CD8-positive, alpha-beta T cell (primary cell): ENCODE measurements at regions of chr12 and their contacts with region 1.

Region 1: DNA sequence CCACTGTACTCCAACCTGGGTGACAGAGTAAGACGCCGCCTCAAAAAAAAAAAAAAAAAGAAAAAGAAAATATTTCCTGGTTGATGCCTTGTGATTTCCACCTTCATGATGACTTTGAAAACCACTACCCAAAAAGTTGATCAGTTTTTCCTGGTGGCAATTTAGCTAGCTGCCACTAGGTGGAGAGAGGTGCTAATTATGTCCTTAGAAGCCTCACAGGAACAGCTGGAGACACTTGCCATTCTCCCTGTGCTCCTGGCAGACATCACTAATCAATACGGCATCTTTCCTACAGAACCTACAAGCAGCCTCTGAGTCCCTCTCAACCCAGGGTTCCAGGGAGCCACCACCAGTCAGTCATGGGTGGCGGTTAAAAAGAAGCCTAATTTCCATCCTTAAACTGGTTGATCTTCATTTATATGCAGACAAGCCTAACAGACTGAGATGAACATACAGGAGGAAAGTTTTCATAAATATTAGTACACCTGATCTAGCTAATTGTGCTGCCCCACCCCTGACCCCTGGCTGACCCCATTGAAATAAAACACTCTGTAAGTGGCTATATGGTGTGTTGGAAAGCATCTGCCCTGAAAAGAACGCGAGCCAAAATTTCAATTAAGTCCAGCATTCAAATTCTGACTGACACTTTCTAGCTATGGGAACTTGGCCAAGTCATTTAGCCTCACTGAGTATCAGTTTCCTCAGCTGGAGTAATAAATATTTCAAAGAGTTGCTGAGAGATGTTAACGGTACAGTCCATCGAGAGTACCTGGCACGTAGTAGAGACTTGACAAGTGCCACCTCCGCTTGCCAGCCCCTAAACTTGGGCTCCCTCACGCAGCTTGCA is 6.2 kb upstream of the OAS1 start:
- DNase-seq: peak in 6 of 9 experiments; percentile 7 to 65 (median 35)
- ATAC-seq: peak; percentile 59
- H3K4me3 ChIP-seq: no peak overlapping the region
- H3K4me3 Mint-ChIP-seq: no peak overlapping the region
- H3K27ac ChIP-seq: no peak overlapping the region
- H3K27ac Mint-ChIP-seq: no peak overlapping the region
- H3K4me1 ChIP-seq: peaks cover 4% of the 10 kb centered on the region
- H3K4me1 Mint-ChIP-seq: peaks cover 22% of the 10 kb centered on the region
- H3K27me3 ChIP-seq: no peaks in the 10 kb centered on the region
- H3K27me3 Mint-ChIP-seq: peaks cover 7% of the 10 kb centered on the region
- CTCF ChIP-seq: peak; percentile 71

Region 2: DNA sequence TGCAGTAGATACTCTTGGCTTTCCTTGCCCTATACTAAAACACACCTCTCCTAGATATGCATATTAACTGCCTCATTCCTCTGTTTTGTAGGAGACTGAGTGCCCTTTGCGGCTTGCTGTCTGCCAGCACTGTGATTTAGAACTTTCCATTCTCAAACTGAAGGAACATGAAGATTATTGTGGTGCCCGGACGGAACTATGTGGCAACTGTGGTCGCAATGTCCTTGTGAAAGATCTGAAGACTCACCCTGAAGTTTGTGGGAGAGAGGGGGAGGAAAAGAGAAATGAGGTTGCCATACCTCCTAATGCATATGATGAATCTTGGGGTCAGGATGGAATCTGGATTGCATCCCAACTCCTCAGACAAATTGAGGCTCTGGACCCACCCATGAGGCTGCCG is 759.8 kb before region 1 on chr12:
- CTCF ChIA-PET with region 1: no interaction called
- POLR2A ChIA-PET with region 1: no interaction called
- intact Hi-C with region 1: no loop called
- DNase-seq: peak in 1 of 9 experiments; percentile 40
- ATAC-seq: no peak
- H3K4me3 ChIP-seq: no peak overlapping the region
- H3K4me3 Mint-ChIP-seq: no peak overlapping the region
- H3K27ac ChIP-seq: no peak overlapping the region
- H3K27ac Mint-ChIP-seq: peak overlapping the region; percentile 21
- H3K4me1 ChIP-seq: no peaks in the 10 kb centered on the region
- H3K4me1 Mint-ChIP-seq: no peaks in the 10 kb centered on the region
- H3K27me3 ChIP-seq: no peaks in the 10 kb centered on the region
- H3K27me3 Mint-ChIP-seq: no peaks in the 10 kb centered on the region
- CTCF ChIP-seq: no peak

Region 3: GRCh38 chr12:112937741-112938719 is 37.5 kb after region 1 on chr12 and contains the start of gene OAS3:
- CTCF ChIA-PET with region 1: interaction called, 4 read pairs
- POLR2A ChIA-PET with region 1: no interaction called
- intact Hi-C with region 1: loop called in 1 of 2 experiments (anchors 5 kb)
- DNase-seq: peak; percentile 20 to 92 (median 62)
- ATAC-seq: peak; percentile 67
- H3K4me3 ChIP-seq: peak within 1 kb of the TSS; percentile 68 to 81
- H3K4me3 Mint-ChIP-seq: peak within 1 kb of the TSS; percentile 87
- H3K27ac ChIP-seq: peak within 1 kb of the TSS; percentile 69 to 78
- H3K27ac Mint-ChIP-seq: peak within 1 kb of the TSS; percentile 89
- H3K4me1 ChIP-seq: peaks cover 20% of the 10 kb centered on the region
- H3K4me1 Mint-ChIP-seq: peaks cover 30% of the 10 kb centered on the region
- H3K27me3 ChIP-seq: no peaks in the 10 kb centered on the region
- H3K27me3 Mint-ChIP-seq: no peaks in the 10 kb centered on the region
- CTCF ChIP-seq: no peak
- total RNA-seq, gene OAS3: 7.7 to 8.2 TPM

Region 4: GRCh38 chr12:112992541-112993398 is 92.2 kb after region 1 on chr12:
- CTCF ChIA-PET with region 1: interaction called, 14 read pairs
- POLR2A ChIA-PET with region 1: no interaction called
- intact Hi-C with region 1: no loop called
- DNase-seq: peak; percentile 25 to 70 (median 46)
- ATAC-seq: peak; percentile 79
- H3K4me3 ChIP-seq: no peak overlapping the region
- H3K4me3 Mint-ChIP-seq: no peak overlapping the region
- H3K27ac ChIP-seq: no peak overlapping the region
- H3K27ac Mint-ChIP-seq: no peak overlapping the region
- H3K4me1 ChIP-seq: peaks cover 9% of the 10 kb centered on the region
- H3K4me1 Mint-ChIP-seq: peaks cover 11% of the 10 kb centered on the region
- H3K27me3 ChIP-seq: no peaks in the 10 kb centered on the region
- H3K27me3 Mint-ChIP-seq: no peaks in the 10 kb centered on the region
- CTCF ChIP-seq: peak; percentile 74

Region 5: GRCh38 chr12:113030875-113031525 is 130.5 kb after region 1 on chr12:
- CTCF ChIA-PET with region 1: interaction called, 23 read pairs
- POLR2A ChIA-PET with region 1: no interaction called
- intact Hi-C with region 1: loop called in 1 of 2 experiments (anchors 1 kb)
- DNase-seq: peak in 2 of 9 experiments; percentile 36 to 48
- ATAC-seq: no peak
- H3K4me3 ChIP-seq: no peak overlapping the region
- H3K4me3 Mint-ChIP-seq: no peak overlapping the region
- H3K27ac ChIP-seq: no peak overlapping the region
- H3K27ac Mint-ChIP-seq: no peak overlapping the region
- H3K4me1 ChIP-seq: no peaks in the 10 kb centered on the region
- H3K4me1 Mint-ChIP-seq: peaks cover 3% of the 10 kb centered on the region
- H3K27me3 ChIP-seq: no peaks in the 10 kb centered on the region
- H3K27me3 Mint-ChIP-seq: peaks cover 10% of the 10 kb centered on the region
- CTCF ChIP-seq: peak; percentile 44

Region 6: GRCh38 chr12:113098446-113098896 is 197.9 kb after region 1 on chr12:
- CTCF ChIA-PET with region 1: interaction called, 10 read pairs
- POLR2A ChIA-PET with region 1: no interaction called
- intact Hi-C with region 1: loop called (anchors 1 to 2 kb)
- DNase-seq: peak; percentile 35 to 78 (median 66)
- ATAC-seq: peak; percentile 93
- H3K4me3 ChIP-seq: no peak overlapping the region
- H3K4me3 Mint-ChIP-seq: no peak overlapping the region
- H3K27ac ChIP-seq: no peak overlapping the region
- H3K27ac Mint-ChIP-seq: peak overlapping the region; percentile 18
- H3K4me1 ChIP-seq: peaks cover 9% of the 10 kb centered on the region
- H3K4me1 Mint-ChIP-seq: peaks cover 13% of the 10 kb centered on the region
- H3K27me3 ChIP-seq: no peaks in the 10 kb centered on the region
- H3K27me3 Mint-ChIP-seq: no peaks in the 10 kb centered on the region
- CTCF ChIP-seq: peak; percentile 93